ENCODE measurements at regions of chr3 and their contacts with region 1.

Region 1: GRCh38 chr3:39447637-39448483 is 19.6 kb upstream of the MOBP start:
- DNase-seq: peak; percentile 78
- H3K4me3 Mint-ChIP-seq: no peak overlapping the region
- H3K27ac Mint-ChIP-seq: no peak overlapping the region
- H3K4me1 Mint-ChIP-seq: no peaks in the 10 kb centered on the region
- H3K27me3 Mint-ChIP-seq: no peaks in the 10 kb centered on the region

Region 2: DNA sequence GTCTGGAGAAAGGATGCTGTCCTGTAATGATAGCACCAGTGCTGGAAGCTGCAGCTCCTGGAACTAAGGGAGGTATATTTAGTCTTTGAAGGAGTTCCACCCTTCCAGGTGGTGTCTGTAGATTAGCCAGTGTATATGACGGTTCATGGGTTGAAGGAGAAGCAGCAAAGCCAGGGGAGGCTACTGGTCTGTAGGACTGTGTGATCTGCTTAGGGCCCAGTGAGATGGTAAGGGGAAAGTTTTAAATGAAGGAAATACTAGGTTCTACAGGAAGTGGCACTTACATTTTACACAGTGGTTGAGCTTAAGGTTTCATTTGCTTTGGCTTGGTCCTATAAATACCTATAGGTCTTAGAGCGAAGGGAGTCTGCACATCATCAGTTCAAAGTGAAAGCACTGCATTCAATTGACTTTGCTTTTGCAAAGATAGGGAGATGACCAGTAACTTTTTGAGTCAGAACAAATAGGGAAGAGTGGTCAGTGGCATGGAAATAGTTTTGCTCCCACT is 59.1 kb before region 1 on chr3:
- CTCF ChIA-PET with region 1: no interaction called
- intact Hi-C with region 1: no loop called
- DNase-seq: no peak
- H3K4me3 Mint-ChIP-seq: no peak overlapping the region
- H3K27ac Mint-ChIP-seq: peak overlapping the region; percentile 39
- H3K4me1 Mint-ChIP-seq: peaks cover 46% of the 10 kb centered on the region
- H3K27me3 Mint-ChIP-seq: no peaks in the 10 kb centered on the region

Region 3: GRCh38 chr3:39460677-39461076 is 12.8 kb after region 1 on chr3:
- CTCF ChIA-PET with region 1: interaction called, 12 read pairs
- intact Hi-C with region 1: no loop called
- DNase-seq: no peak
- H3K4me3 Mint-ChIP-seq: no peak overlapping the region
- H3K27ac Mint-ChIP-seq: no peak overlapping the region
- H3K4me1 Mint-ChIP-seq: no peaks in the 10 kb centered on the region
- H3K27me3 Mint-ChIP-seq: no peaks in the 10 kb centered on the region

Region 4: DNA sequence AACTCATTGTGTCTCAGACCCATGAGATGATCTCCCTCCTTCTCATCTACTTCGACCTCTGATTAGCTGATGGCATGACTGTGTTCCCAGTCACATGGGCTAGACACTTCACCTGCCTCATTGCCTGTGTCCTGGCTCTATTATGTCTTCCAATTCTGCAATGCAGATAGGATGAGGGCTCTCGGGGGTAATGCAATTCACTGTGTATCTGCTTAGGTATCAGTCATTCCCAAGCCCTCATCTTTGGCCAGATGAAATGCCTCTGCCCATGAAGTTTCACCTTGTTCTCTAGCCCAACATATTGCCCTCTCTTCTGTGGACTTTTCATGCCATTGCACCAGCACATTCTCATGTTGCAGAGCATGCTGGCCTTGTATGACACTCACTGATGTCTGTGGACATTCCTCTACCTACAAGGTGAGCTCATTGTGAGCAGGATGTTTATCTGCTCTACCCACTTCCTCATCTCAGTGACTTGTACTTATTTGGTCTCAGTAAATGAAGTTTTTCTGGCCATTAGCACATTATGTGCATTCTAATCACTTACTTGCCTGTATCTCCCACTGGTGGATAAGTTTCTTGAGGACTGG is 51.9 kb after region 1 on chr3:
- CTCF ChIA-PET with region 1: interaction called, 59 read pairs
- intact Hi-C with region 1: loop called (anchors 1 kb)
- DNase-seq: no peak
- H3K4me3 Mint-ChIP-seq: no peak overlapping the region
- H3K27ac Mint-ChIP-seq: no peak overlapping the region
- H3K4me1 Mint-ChIP-seq: peaks cover 4% of the 10 kb centered on the region
- H3K27me3 Mint-ChIP-seq: peaks cover 35% of the 10 kb centered on the region